MCF 10A (cell line): ENCODE measurements at regions of chr5 and their contacts with region 1.

Region 1: DNA sequence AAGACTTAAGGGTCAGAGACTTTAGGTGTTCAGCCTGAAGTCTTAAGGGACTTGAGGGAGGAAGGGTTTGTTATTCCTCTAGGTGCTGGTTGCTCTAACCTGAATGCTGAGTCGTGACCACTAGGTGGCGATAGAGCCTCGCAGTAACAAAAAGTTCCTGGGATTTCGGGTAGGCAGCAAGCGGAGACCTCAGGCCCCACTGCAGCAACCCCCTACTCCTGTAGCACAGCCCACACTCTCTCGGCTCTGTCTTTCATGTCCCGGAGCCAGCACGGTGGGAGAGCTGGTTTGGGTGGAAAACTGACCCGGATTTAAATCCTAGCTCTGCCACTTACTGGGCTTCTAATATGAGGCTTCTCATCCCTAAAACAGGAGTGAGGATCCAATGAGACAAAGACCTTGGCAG is 100.3 kb upstream of the PANK3 start:
- DNase-seq: peak; percentile 84
- H3K4me3 Mint-ChIP-seq: no peak overlapping the region
- H3K27ac Mint-ChIP-seq: no peak overlapping the region
- H3K4me1 Mint-ChIP-seq: no peaks in the 10 kb centered on the region
- H3K27me3 Mint-ChIP-seq: no peaks in the 10 kb centered on the region
- CTCF ChIP-seq: peak; percentile 96

Region 2: GRCh38 chr5:168624850-168625357 is 54.6 kb before region 1 on chr5:
- CTCF ChIA-PET with region 1: interaction called, 7 read pairs
- POLR2A ChIA-PET with region 1: interaction called, 3 read pairs
- intact Hi-C with region 1: loop called (anchors 2 kb)
- DNase-seq: peak; percentile 91
- H3K4me3 Mint-ChIP-seq: peak overlapping the region; percentile 4
- H3K27ac Mint-ChIP-seq: peak overlapping the region; percentile 16
- H3K4me1 Mint-ChIP-seq: peaks cover 23% of the 10 kb centered on the region
- H3K27me3 Mint-ChIP-seq: peaks cover 4% of the 10 kb centered on the region
- CTCF ChIP-seq: no peak

Region 3: DNA sequence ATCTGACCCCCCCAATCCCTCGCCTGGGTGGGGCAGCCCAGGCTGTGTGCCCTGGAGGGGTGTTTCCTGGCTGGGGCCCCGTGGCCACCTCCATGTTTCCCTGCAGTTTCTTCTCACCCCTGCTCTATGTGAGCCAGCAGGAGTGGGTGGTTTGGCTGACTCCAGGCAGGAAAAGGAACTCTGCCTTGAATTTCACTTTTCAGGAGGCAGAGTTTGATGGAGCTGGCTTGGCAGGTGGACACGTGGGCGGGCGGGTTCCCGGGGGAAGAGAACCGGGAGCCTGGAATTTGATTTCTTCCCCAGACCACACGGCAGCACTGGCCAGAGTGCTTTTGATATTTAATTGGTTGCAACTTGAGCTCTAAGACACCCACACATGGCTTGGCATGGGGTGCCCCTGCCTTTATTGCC is 19.5 kb after region 1 on chr5:
- CTCF ChIA-PET with region 1: interaction called, 32 read pairs
- POLR2A ChIA-PET with region 1: no interaction called
- intact Hi-C with region 1: no loop called
- DNase-seq: no peak
- H3K4me3 Mint-ChIP-seq: no peak overlapping the region
- H3K27ac Mint-ChIP-seq: no peak overlapping the region
- H3K4me1 Mint-ChIP-seq: no peaks in the 10 kb centered on the region
- H3K27me3 Mint-ChIP-seq: no peaks in the 10 kb centered on the region
- CTCF ChIP-seq: no peak

Region 4: GRCh38 chr5:168947212-168947868 is 267.8 kb after region 1 on chr5:
- CTCF ChIA-PET with region 1: interaction called, 10 read pairs
- POLR2A ChIA-PET with region 1: no interaction called
- intact Hi-C with region 1: loop called (anchors 2 kb)
- DNase-seq: peak; percentile 77
- H3K4me3 Mint-ChIP-seq: no peak overlapping the region
- H3K27ac Mint-ChIP-seq: no peak overlapping the region
- H3K4me1 Mint-ChIP-seq: no peaks in the 10 kb centered on the region
- H3K27me3 Mint-ChIP-seq: no peaks in the 10 kb centered on the region
- CTCF ChIP-seq: peak; percentile 83

Region 5: GRCh38 chr5:169548315-169548714 is 868.8 kb after region 1 on chr5:
- CTCF ChIA-PET with region 1: interaction called, 26 read pairs
- POLR2A ChIA-PET with region 1: no interaction called
- intact Hi-C with region 1: loop called (anchors 1 kb)
- DNase-seq: peak; percentile 55
- H3K4me3 Mint-ChIP-seq: no peak overlapping the region
- H3K27ac Mint-ChIP-seq: no peak overlapping the region
- H3K4me1 Mint-ChIP-seq: no peaks in the 10 kb centered on the region
- H3K27me3 Mint-ChIP-seq: peaks cover 30% of the 10 kb centered on the region
- CTCF ChIP-seq: peak; percentile 78

Region 6: DNA sequence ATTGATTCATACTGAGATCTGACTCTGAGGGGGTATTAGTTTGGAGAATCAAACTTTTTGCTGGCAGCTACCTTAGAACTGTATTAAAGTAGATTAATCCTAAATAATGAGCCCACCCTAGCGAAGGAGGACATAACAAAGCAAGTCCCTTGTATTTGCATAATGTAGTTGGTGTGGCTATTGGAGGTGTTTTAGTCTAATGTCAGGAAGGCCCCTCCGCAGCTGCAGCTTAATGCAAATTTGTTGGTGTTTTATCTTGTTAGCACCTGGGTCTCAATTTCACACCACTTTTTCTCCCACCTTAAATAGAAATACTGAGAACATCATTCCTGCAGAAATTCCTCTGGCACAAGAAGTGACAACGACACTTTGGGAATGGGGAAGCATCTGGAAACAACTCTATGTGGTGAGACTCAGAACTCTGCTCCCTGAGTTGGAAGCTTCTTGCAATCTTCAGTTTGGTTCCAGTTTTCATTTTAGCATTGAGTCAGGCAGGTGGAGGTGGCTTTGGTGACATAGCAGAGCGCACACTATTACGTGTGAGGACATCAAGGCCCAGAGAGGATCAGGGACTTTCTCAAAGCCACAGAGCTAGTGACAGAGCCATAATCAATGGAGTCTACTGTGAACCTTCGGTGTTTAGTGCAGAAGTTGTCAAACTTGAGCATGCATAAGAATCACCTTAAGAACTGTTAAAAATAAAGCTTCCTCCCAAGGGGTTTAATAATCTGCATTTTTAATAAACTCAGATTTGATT is 991.4 kb after region 1 on chr5:
- CTCF ChIA-PET with region 1: no interaction called
- POLR2A ChIA-PET with region 1: no interaction called
- intact Hi-C with region 1: no loop called
- DNase-seq: no peak
- H3K4me3 Mint-ChIP-seq: no peak overlapping the region
- H3K27ac Mint-ChIP-seq: no peak overlapping the region
- H3K4me1 Mint-ChIP-seq: peaks cover 16% of the 10 kb centered on the region
- H3K27me3 Mint-ChIP-seq: no peaks in the 10 kb centered on the region
- CTCF ChIP-seq: no peak